GM10248 (cell line): ENCODE measurements at regions of chr19 and their contacts with region 1.

Region 1: GRCh38 chr19:12064590-12065538 is at the start of gene ZNF844:
- DNase-seq: peak; percentile 93
- CTCF ChIP-seq: no peak

Region 2: DNA sequence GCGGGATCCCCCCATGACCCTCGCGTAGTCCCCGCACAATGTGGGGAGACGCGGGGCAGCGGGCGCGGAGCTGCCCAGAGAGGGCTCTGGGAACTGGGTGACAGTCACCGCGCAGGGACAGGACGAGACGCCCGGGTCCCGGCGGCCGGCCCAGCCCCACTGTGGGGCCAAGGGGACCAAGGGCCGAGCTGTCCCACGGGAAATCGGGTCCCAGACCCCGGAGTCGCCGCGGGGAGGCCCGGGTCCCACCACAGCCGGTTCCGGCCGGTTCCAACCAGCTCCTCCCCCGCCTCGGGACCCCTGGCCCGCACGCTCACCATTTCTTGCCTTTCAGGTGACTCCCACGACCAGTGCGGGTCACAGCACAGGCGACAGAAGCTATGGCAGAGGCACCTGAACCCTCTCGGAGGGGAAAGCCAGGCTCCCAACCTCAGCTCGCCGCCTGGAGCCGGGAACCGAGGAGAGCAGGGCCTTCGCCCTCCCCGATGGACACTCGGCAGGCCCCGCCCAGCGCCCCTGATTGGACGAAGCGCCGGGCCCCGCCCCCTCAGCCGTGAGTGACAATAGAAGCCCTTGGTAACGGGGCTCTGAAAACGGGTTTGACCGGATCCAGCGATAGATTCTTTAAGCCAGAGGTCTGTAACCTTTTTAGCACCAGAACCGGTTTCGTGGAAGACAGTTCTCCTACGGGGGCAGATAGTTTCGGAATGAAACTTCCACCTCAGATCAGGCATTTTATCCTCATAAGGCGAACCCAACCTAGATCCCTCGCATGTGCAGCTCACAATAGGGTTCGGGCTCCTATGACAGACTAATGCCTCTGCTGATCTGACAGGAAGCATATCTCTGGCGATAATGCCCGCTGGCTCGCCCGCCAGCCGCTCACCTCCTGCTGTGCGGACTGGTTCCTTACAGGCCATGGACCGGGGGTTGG is 29.4 kb before region 1 on chr19 and contains the start of gene ZNF433:
- CTCF ChIA-PET with region 1: interaction called, 18 read pairs
- POLR2A ChIA-PET with region 1: interaction called, 5 read pairs
- DNase-seq: peak; percentile 93
- CTCF ChIP-seq: no peak

Region 3: DNA sequence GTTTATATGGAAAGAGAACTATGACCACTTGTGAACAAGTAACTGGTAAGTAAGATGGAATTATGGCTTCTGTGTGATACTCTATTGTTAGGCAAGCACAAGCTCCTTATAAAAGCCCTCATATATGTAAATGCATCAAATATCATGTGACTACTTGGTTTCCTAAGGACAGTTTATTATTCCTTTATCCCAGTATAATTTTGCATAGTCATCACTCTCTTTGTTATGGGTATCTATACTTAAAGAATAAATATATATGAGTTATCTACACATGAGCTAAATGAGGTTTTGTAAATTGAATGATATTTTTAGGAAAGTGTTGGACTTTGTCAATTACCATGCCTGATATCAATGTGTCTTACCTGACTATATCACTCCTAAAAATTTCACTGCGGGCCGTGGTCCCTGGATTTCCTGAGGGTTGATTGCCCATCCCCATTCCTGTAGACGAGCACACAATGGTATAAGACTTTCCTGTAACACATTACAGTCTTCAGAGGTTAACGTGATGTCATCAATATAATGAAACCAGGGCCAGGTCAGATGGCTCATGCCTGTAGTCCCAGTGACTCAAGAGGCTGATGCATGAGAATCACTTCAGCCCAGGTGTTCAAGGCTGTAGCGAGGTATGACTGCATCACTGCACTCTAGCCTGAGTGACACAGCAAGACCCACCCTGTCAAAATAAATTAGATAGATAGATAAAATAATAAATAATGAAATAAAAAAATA is 20.4 kb after region 1 on chr19:
- CTCF ChIA-PET with region 1: interaction called, 47 read pairs
- POLR2A ChIA-PET with region 1: no interaction called
- DNase-seq: no peak
- CTCF ChIP-seq: no peak

Region 4: GRCh38 chr19:12139885-12140547 is 75.2 kb after region 1 on chr19 and contains the start of gene ZNF20:
- CTCF ChIA-PET with region 1: interaction called, 68 read pairs
- POLR2A ChIA-PET with region 1: no interaction called
- DNase-seq: peak; percentile 96
- CTCF ChIP-seq: peak; percentile 5